Gastrocnemius medialis (tissue), 4 donors: ENCODE measurements at regions of chr11 and their contacts with region 1.

Region 1: DNA sequence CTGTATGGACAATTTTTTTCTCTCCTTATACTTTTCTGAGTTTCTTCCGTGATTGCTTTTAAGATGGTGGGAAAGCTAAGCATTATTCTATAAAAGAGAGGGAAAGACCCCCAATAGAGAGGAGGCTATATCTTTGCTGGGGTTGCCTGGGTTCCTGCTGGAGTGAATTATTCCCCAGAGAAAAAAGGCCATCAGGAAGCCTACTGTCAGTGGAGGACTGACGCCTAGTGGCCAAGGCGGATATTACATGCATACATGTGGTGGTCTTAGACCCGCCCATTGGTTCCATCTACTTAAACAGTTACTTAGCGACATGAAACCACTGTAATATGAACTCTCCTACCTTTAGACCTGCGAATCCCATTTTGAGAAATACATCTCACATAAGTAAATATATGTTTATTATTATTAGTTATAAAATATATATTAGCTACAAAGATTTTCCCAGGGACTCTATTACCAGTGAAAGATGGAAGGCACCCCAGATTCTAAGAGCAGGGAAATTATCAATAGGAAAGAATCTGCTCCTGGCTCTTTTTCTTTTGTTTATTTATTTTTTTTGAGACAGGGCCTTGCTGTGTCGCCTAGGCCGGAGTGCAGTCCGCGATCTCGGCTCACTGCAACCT is 15.7 kb upstream of the PGA3 start:
- DNase-seq: peak in 1 of 2 donors; percentile 42
- ATAC-seq: peak in 1 of 2 donors; percentile 64
- H3K4me3 ChIP-seq: no peak overlapping the region
- H3K27ac ChIP-seq: no peak overlapping the region
- H3K4me1 ChIP-seq: no peaks in the 10 kb centered on the region
- H3K27me3 ChIP-seq: peaks cover 0 to 4% (median 0%) of the 10 kb centered on the region in 3 donors
- CTCF ChIP-seq: peak; percentile 65 to 87 (median 81)
- POLR2A ChIP-seq: no peak

Region 2: DNA sequence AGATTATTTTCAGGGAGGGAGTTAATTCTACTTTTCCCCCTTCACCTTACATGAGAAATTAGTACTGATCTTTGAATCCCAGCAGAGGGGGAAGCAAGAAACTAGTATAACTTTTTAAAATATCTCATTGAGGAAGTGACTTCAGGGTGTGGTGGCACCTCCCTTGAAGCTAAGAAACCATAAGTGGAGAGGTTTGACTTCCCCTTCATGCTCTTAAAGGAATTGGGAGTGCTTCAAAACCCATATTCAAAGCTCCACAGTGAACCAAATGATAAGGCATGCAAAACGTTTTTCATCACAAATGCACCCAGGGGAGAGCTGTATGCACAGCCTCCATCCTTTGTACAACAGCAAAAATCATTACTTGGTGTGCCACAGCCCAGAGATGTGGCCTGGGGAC is 790.8 kb before region 1 on chr11:
- in situ Hi-C with region 1: no loop called
- intact Hi-C with region 1: no loop called
- DNase-seq: no peak
- ATAC-seq: no peak
- H3K4me3 ChIP-seq: no peak overlapping the region
- H3K27ac ChIP-seq: no peak overlapping the region
- H3K4me1 ChIP-seq: no peaks in the 10 kb centered on the region
- H3K27me3 ChIP-seq: no peaks in the 10 kb centered on the region
- CTCF ChIP-seq: no peak
- POLR2A ChIP-seq: no peak

Region 3: DNA sequence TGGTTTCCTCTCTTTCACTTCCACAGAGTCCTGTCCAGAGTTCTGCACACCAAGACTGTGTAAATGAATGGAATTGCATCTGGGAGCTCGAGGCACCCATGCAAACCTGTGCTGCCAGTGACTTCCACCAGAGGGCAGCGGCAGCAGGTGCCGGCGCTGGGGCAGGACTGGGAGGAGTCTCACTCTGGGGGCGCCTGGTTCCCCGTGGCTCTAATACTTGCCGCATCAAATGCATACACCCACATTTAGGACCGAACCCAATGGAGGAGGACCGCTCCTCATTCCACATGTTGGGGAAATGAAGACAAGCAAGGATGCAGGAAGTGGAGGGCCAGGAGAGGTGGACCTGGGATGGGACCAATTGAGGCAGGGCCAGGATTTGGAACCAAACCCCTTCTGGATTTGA is 217.2 kb before region 1 on chr11:
- in situ Hi-C with region 1: no loop called
- intact Hi-C with region 1: loop called (anchors 1 kb)
- DNase-seq: no peak
- ATAC-seq: peak in 1 of 2 donors; percentile 46
- H3K4me3 ChIP-seq: no peak overlapping the region
- H3K27ac ChIP-seq: no peak overlapping the region
- H3K4me1 ChIP-seq: no peaks in the 10 kb centered on the region
- H3K27me3 ChIP-seq: no peaks in the 10 kb centered on the region
- CTCF ChIP-seq: peak; percentile 41 to 85 (median 73)
- POLR2A ChIP-seq: no peak

Region 4: DNA sequence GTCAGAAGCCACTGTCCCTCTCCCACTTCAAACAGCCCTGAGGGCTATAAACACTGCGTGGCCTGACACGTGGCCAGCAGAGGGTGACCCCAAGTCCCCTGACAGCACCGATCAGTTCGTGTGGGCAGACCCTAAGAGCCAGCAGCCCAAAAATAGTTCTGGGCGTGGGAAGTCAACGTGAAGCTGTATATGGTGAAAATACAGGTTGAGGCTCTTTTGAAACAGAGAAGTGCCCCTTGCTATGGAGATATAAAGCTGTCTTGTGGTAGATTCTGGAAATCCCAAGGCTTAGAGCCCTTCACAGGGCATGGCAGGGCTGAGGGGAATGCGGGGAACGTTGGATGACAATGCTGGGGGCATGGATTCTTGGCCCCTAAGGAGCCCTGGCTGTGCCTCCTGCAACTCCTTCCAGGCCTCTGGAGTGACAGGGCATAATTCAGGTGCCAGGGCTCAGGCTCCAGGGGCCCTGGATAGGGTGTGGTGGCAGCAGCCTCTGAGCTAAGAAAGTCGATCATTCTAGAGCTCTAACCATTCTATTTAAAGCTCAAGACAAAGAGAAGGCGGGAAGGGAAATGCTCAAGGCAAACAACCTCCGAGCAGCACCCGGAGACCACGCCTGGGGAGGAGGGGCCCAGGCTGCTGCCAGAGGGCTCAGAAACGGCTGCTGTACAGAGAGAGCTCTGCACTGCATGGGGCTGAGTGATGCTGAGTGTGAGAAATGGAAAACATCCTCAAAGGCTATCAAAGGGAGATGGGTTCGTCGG is 145.7 kb before region 1 on chr11:
- in situ Hi-C with region 1: loop called in 1 of 4 experiments (anchors 25 kb)
- intact Hi-C with region 1: no loop called
- DNase-seq: no peak
- ATAC-seq: peak in 1 of 2 donors; percentile 30
- H3K4me3 ChIP-seq: no peak overlapping the region
- H3K27ac ChIP-seq: peak overlapping the region in 1 of 4 donors; percentile 46
- H3K4me1 ChIP-seq: peaks cover 3 to 11% of the 10 kb centered on the region in 2 donors
- H3K27me3 ChIP-seq: no peaks in the 10 kb centered on the region
- CTCF ChIP-seq: no peak
- POLR2A ChIP-seq: no peak

Region 5: GRCh38 chr11:61111786-61112517 is 75.7 kb before region 1 on chr11:
- in situ Hi-C with region 1: no loop called
- intact Hi-C with region 1: no loop called
- DNase-seq: no peak
- ATAC-seq: no peak
- H3K4me3 ChIP-seq: no peak overlapping the region
- H3K27ac ChIP-seq: no peak overlapping the region
- H3K4me1 ChIP-seq: no peaks in the 10 kb centered on the region
- H3K27me3 ChIP-seq: no peaks in the 10 kb centered on the region
- CTCF ChIP-seq: no peak
- POLR2A ChIP-seq: no peak

Region 6: GRCh38 chr11:61129639-61130523 is 57.7 kb before region 1 on chr11:
- in situ Hi-C with region 1: no loop called
- intact Hi-C with region 1: loop called (anchors 5 kb)
- DNase-seq: peak; percentile 53 to 69
- ATAC-seq: peak; percentile 58 to 83
- H3K4me3 ChIP-seq: no peak overlapping the region
- H3K27ac ChIP-seq: peak overlapping the region in 1 of 4 donors; percentile 28
- H3K4me1 ChIP-seq: peaks cover 11 to 14% of the 10 kb centered on the region in 2 donors
- H3K27me3 ChIP-seq: no peaks in the 10 kb centered on the region
- CTCF ChIP-seq: peak; percentile 82 to 96 (median 92)
- POLR2A ChIP-seq: no peak